Posterior vena cava (tissue), 2 donors: ENCODE measurements at regions of chr2 and their contacts with region 1.

Region 1: GRCh38 chr2:135913727-135914365 is 37.6 kb upstream of the MCM6 start:
- DNase-seq: no peak

Region 2: GRCh38 chr2:135582383-135582782 is 331.5 kb before region 1 on chr2:
- intact Hi-C with region 1: no loop called
- DNase-seq: no peak

Region 3: GRCh38 chr2:135882415-135882814 is 31.4 kb before region 1 on chr2:
- intact Hi-C with region 1: loop called in 1 of 2 experiments (anchors 1 kb)
- DNase-seq: no peak

Region 4: GRCh38 chr2:136384531-136385303 is 470.9 kb after region 1 on chr2:
- intact Hi-C with region 1: loop called in 1 of 2 experiments (anchors 10 kb)
- DNase-seq: no peak

Region 5: DNA sequence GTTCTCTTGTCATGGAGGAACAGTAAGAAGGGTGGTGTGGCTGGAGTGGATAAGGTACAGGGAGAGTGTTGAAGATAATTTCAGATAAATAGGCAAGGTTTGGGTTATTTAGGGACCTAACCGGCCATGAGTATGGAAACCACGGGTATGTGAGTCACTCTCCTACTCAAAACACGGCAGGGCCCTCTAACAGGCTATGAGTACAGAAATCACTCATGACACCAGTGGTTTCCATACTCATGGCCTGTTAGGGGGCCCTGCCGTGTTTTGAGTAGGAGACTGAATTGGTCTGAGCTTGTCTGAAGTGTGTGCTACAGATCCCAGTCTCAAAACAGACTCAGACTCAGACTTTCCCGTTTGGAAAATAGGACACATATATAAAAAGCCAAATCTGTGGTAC is 1622.1 kb after region 1 on chr2:
- intact Hi-C with region 1: no loop called
- DNase-seq: no peak